Left lung (tissue), 14 donors: ENCODE measurements at regions of chr3 and their contacts with region 1.

Region 1: GRCh38 chr3:141738022-141738890 is at the start of gene RNF7:
- DNase-seq: peak; percentile 94 to 98 (median 96)
- ATAC-seq: peak; percentile 97
- H3K4me3 ChIP-seq: peak within 1 kb of the TSS; percentile 61 to 69
- H3K27ac ChIP-seq: peak within 1 kb of the TSS; percentile 91 to 94
- H3K4me1 ChIP-seq: peaks cover 15 to 47% of the 10 kb centered on the region in 2 donors
- H3K27me3 ChIP-seq: no peaks in the 10 kb centered on the region
- CTCF ChIP-seq: peak; percentile 84 to 96
- polyA plus RNA-seq, gene RNF7: 92.0 to 107 (median 98.4) TPM

Region 2: GRCh38 chr3:141646760-141647561 is 91.3 kb before region 1 on chr3:
- intact Hi-C with region 1: no loop called
- DNase-seq: peak in 3 of 4 donors; percentile 29 to 70 (median 53)
- ATAC-seq: peak; percentile 89
- H3K4me3 ChIP-seq: no peak overlapping the region
- H3K27ac ChIP-seq: no peak overlapping the region
- H3K4me1 ChIP-seq: peaks cover 0 to 9% of the 10 kb centered on the region in 2 donors
- H3K27me3 ChIP-seq: no peaks in the 10 kb centered on the region
- CTCF ChIP-seq: no peak

Region 3: GRCh38 chr3:141875374-141875892 is 137.2 kb after region 1 on chr3:
- intact Hi-C with region 1: loop called in 1 of 2 experiments (anchors 10 kb)
- DNase-seq: peak; percentile 82 to 95 (median 90)
- ATAC-seq: peak; percentile 89
- H3K4me3 ChIP-seq: peak overlapping the region; percentile 84 to 92
- H3K27ac ChIP-seq: peak overlapping the region; percentile 99
- H3K4me1 ChIP-seq: peaks cover 8 to 33% of the 10 kb centered on the region in 2 donors
- H3K27me3 ChIP-seq: no peaks in the 10 kb centered on the region
- CTCF ChIP-seq: peak; percentile 65 to 86